AG04449 (cell line): ENCODE measurements at regions of chr20 and their contacts with region 1.

Region 1: GRCh38 chr20:32789896-32790750 is 27.9 kb downstream of the DNMT3B start:
- DNase-seq: peak; percentile 16
- H3K4me3 ChIP-seq: no peak overlapping the region
- CTCF ChIP-seq: peak; percentile 97

Region 2: DNA sequence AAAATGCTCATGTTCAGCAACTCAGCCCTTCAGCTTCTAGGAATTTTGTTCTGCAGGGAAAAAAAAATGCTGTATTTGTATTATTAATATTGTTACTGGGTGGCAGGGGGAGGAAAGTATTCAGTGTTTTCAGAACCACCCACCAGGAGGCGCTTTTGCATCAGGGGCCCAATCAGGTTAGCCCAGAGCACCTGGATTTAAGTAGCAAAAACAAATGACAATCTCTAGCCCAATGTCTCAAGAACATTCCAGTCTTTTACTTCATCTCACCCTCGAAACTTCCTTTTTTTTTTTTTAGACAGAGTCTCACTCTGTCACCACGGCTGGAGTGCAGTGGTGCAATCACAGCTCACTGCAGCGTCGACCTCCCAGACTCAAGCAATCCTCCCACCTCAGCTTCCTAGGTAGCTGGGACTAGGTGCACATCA is 115.7 kb before region 1 on chr20:
- CTCF ChIA-PET with region 1: interaction called, 26 read pairs
- POLR2A ChIA-PET with region 1: no interaction called
- DNase-seq: no peak
- H3K4me3 ChIP-seq: no peak overlapping the region
- CTCF ChIP-seq: peak; percentile 67

Region 3: GRCh38 chr20:32697608-32698007 is 92.5 kb before region 1 on chr20:
- CTCF ChIA-PET with region 1: no interaction called
- POLR2A ChIA-PET with region 1: no interaction called
- DNase-seq: no peak
- H3K4me3 ChIP-seq: no peak overlapping the region
- CTCF ChIP-seq: no peak

Region 4: DNA sequence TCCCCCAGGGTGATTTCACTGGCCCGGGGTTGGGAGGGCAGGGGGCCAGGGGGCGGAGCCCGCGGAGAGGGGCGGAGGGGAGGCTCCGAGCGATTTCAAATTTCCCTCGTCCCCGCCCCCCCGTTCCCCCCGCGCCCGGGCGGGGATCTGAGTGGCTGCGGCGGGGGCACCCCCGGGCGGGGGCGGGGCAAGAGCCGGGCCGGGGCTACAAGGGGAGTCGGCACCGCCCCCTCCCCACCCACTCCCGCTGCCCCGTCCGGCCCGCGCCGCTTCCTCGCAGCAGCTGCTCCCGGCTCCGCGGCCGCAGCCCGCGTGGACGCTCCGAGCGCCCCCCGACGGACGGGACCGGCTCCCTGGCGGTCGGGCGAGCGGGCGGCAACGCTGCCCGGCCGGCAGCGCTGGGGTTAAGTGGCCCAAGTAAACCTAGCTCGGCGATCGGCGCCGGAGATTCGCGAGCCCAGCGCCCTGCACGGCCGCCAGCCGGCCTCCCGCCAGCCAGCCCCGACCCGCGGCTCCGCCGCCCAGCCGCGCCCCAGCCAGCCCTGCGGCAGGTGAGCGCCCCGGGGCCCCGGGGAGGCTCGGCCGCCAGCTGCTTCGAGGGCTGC is 27.9 kb before region 1 on chr20 and contains the start of gene DNMT3B:
- CTCF ChIA-PET with region 1: interaction called, 13 read pairs
- POLR2A ChIA-PET with region 1: interaction called, 3 read pairs
- DNase-seq: no peak
- H3K4me3 ChIP-seq: peak within 1 kb of the TSS; percentile 75
- CTCF ChIP-seq: peak; percentile 14

Region 5: DNA sequence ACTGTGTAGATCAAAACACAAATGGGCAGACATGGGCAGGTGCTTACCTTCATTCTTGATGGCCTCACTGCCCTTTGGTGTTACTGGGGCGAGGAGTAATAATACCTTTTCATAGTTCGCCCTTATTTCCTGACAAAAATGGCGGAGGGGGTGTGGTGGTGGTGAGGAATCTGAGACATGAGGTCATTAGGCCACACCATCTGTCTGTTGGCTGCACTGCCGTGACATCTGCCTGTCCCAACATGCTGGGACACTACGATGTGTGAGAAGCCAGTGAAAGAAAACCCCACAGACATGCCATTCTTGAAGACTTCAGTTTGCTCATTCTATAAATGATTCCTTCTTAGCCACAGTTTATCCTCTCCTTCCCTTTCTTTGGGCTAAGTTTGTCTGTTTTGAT is 16.2 kb after region 1 on chr20:
- CTCF ChIA-PET with region 1: interaction called, 44 read pairs
- POLR2A ChIA-PET with region 1: no interaction called
- DNase-seq: no peak
- H3K4me3 ChIP-seq: no peak overlapping the region
- CTCF ChIP-seq: no peak

Region 6: GRCh38 chr20:32819992-32820710 is 30.0 kb after region 1 on chr20:
- CTCF ChIA-PET with region 1: interaction called, 12 read pairs
- POLR2A ChIA-PET with region 1: no interaction called
- DNase-seq: no peak
- H3K4me3 ChIP-seq: peak overlapping the region; percentile 83
- CTCF ChIP-seq: no peak

Region 7: GRCh38 chr20:32908334-32909292 is 118.5 kb after region 1 on chr20:
- CTCF ChIA-PET with region 1: no interaction called
- POLR2A ChIA-PET with region 1: no interaction called
- DNase-seq: no peak
- H3K4me3 ChIP-seq: no peak overlapping the region
- CTCF ChIP-seq: no peak

Region 8: DNA sequence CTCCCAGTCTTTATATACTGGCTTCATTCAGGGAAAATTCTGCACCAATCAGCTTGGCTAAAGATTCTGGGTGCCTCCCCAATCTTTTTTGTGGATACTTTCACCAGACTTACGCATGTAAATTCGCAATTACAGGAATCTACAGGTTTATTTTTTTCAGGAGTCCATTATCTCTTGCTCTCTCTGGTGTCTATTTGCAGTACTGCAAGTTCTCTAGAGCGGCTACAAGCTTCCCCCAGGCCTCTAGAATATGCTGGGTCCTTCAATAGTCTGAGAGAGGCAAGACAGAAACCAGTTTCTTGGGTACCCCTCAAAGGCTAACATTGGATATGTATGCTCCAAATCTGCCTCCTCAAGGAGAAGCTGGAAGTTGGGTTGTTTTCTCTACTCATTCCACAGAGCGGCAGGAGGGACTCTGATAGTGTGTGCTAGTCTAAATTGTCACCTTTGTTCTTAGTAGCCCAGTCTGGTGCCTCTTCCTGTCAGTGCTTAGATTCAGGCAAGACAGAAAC is 155.6 kb after region 1 on chr20:
- CTCF ChIA-PET with region 1: interaction called, 91 read pairs
- POLR2A ChIA-PET with region 1: no interaction called
- DNase-seq: peak; percentile 3
- H3K4me3 ChIP-seq: no peak overlapping the region
- CTCF ChIP-seq: peak; percentile 37

Region 9: DNA sequence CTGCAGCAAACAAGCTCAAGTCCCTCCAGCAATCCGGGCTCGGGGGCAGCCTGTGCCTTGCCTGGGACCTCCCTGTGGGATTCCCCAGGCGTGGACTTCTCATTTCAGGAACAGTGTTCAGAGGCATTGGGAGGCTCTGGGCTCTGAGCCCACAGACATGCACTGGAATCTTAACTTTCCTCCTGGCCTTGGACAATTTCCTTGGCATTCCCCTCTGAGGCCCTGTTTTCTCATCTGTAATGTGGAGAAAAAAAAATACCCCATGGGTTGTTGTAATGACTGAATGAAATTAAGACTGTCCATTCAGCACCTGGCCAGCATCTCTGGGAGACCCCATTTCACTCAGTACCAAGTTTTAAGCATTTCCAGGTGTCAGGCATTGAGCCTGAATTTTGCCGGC is 306.9 kb after region 1 on chr20:
- CTCF ChIA-PET with region 1: interaction called, 30 read pairs
- POLR2A ChIA-PET with region 1: no interaction called
- DNase-seq: no peak
- H3K4me3 ChIP-seq: no peak overlapping the region
- CTCF ChIP-seq: no peak

Region 10: DNA sequence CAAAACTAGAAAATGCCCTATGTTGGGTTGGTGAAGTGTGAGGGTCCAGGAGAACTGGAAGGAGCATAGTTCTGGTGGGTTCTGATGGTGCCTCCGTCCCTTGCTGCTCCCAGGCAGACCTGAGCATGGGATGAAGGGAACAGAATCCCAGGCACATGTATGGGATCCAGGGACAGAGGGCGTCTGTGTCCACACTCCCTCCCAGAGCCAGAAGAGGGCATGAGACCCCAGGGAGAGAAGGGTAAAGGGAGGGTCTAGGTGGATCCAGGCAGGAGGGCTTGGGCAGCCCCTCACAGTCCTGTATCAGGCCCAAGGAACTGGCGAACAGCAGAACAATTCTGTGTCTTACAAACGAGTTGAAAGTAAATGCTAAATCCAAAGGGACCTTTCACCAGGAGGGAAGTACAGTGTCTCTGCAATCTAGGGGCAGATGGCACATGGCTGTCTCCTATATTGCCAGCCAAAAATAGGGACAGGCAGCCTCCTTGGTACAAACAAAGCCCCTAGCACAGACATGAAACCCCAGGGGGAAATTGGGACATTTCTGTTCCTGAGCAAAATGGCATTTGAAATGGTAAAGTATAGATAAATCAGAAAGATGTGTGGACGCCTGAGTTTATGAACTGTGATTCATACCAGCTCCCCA is 443.1 kb after region 1 on chr20:
- CTCF ChIA-PET with region 1: no interaction called
- POLR2A ChIA-PET with region 1: no interaction called
- DNase-seq: no peak
- H3K4me3 ChIP-seq: no peak overlapping the region
- CTCF ChIP-seq: no peak